CD4-positive, alpha-beta memory T cell (primary cell): ENCODE measurements at regions of chr5 and their contacts with region 1.

Region 1: DNA sequence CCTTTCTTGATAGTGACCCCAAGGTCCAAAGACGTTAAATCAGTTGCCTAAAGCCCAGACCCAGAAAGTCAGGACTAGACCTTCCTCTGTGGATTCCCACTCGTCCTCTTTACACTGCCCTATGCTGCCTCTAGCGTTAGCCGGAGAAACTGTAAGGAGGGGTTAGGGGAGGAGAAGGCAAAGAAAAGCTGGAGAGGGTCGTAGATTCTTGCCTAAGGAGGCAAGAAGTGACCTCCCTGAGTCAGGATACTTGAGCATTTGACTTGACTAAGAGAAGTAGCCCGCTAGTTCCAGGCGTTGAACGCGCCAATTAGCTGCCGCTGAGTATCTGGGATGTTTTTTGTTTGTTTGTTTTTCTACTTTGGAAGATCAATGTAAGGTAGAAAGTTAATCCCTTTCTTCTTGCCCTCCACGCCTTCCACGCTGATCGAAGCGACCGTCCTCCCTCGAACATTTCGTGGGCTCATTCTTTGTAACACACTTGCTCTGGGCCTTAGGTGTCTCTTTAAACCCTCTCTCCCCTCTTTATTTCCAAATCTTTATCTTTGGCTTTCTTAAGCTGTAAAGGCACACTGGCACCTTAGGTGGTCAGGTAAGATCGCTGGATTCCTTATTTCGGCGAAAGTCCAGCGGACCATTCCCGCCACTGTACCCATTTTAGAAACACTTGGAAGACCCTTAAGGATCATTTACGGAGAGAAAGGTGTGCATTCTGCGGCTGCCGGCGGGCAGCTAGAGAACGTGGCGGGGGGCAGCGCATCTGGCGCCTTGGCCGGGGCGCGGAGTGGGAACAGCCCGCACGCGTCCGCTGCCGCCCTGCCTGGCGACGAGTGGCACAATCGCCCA is 5.1 kb upstream of the RGMB start:
- DNase-seq: peak; percentile 29 to 43 (median 37)
- H3K4me3 ChIP-seq: peak overlapping the region; percentile 44 to 52
- H3K4me3 Mint-ChIP-seq: peak overlapping the region; percentile 87 to 98 (median 92)
- H3K27ac ChIP-seq: peak overlapping the region; percentile 6
- H3K27ac Mint-ChIP-seq: peak overlapping the region in 6 of 7 donors; percentile 5 to 85 (median 52)
- H3K4me1 ChIP-seq: peaks cover 37% of the 10 kb centered on the region
- H3K4me1 Mint-ChIP-seq: peaks cover 25 to 57% (median 30%) of the 10 kb centered on the region in 4 donors
- H3K27me3 ChIP-seq: peaks cover 21% of the 10 kb centered on the region
- H3K27me3 Mint-ChIP-seq: peaks cover 24 to 26% of the 10 kb centered on the region in 2 donors

Region 2: DNA sequence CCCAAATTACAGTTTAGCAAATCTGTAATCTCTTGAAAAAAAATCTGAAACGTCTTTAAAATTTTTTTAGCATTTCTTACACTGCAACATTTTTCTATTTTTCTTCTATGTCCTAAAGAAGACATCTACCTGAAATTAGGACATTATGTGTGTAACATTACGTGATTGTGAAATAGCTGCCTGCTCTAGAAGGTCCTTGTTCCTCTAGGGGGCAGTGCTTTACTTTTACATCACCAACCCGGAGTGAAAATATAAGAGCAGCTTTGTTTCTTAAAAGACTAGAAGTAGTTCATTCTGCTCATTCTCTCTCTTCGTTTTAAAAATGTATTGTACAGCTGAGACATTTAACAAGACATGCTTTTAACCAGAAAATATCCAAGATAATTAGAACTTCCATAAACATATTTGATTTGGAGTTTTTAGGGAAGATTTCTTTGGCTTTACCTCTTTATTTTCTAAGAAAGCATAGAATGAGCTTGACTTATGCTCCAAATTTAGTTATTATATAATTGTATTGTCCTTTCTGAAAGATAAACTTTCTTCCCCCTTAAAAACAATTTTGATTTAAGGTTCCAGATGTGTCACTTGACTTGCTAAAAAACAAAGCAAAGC is 1537.3 kb before region 1 on chr5:
- CTCF ChIA-PET with region 1: interaction called, 35 read pairs
- POLR2A ChIA-PET with region 1: no interaction called
- intact Hi-C with region 1: loop called (anchors 2 kb)
- DNase-seq: peak in 4 of 5 donors; percentile 31 to 44 (median 37)
- H3K4me3 ChIP-seq: no peak overlapping the region
- H3K4me3 Mint-ChIP-seq: no peak overlapping the region
- H3K27ac ChIP-seq: no peak overlapping the region
- H3K27ac Mint-ChIP-seq: no peak overlapping the region
- H3K4me1 ChIP-seq: no peaks in the 10 kb centered on the region
- H3K4me1 Mint-ChIP-seq: no peaks in the 10 kb centered on the region
- H3K27me3 ChIP-seq: no peaks in the 10 kb centered on the region
- H3K27me3 Mint-ChIP-seq: peaks cover 4 to 6% of the 10 kb centered on the region in 2 donors

Region 3: GRCh38 chr5:98750693-98751092 is 17.7 kb before region 1 on chr5:
- CTCF ChIA-PET with region 1: interaction called, 35 read pairs
- POLR2A ChIA-PET with region 1: no interaction called
- intact Hi-C with region 1: no loop called
- DNase-seq: no peak
- H3K4me3 ChIP-seq: no peak overlapping the region
- H3K4me3 Mint-ChIP-seq: no peak overlapping the region
- H3K27ac ChIP-seq: no peak overlapping the region
- H3K27ac Mint-ChIP-seq: no peak overlapping the region
- H3K4me1 ChIP-seq: no peaks in the 10 kb centered on the region
- H3K4me1 Mint-ChIP-seq: no peaks in the 10 kb centered on the region
- H3K27me3 ChIP-seq: no peaks in the 10 kb centered on the region
- H3K27me3 Mint-ChIP-seq: peaks cover 1 to 7% of the 10 kb centered on the region in 2 donors

Region 4: DNA sequence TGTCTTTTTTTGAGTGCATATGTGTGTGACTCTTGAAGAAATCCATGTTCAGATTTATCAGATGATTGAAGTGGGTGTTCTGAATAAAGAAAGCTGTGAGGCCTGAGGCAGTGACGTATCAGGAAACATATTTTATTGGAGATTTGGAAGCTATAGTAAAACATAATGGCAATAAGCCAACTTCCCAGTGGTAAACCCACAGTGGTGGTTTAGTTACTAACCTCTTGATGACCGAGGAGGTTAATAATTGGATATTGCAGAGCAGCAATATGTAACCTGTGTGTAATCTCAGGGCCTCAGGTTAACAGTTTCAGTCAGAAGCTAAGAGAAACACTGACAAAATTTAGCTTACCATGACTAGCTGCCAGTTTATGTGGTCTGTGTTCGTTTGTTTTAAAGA is 12.0 kb after region 1 on chr5:
- CTCF ChIA-PET with region 1: interaction called, 51 read pairs
- POLR2A ChIA-PET with region 1: interaction called, 6 read pairs
- intact Hi-C with region 1: no loop called
- DNase-seq: no peak
- H3K4me3 ChIP-seq: no peak overlapping the region
- H3K4me3 Mint-ChIP-seq: no peak overlapping the region
- H3K27ac ChIP-seq: no peak overlapping the region
- H3K27ac Mint-ChIP-seq: no peak overlapping the region
- H3K4me1 ChIP-seq: peaks cover 12% of the 10 kb centered on the region
- H3K4me1 Mint-ChIP-seq: peaks cover 13 to 54% (median 18%) of the 10 kb centered on the region in 4 donors
- H3K27me3 ChIP-seq: no peaks in the 10 kb centered on the region
- H3K27me3 Mint-ChIP-seq: peaks cover 0 to 1% of the 10 kb centered on the region in 2 donors

Region 5: GRCh38 chr5:98796197-98796972 is 28.0 kb after region 1 on chr5:
- CTCF ChIA-PET with region 1: interaction called, 97 read pairs
- POLR2A ChIA-PET with region 1: no interaction called
- intact Hi-C with region 1: loop called (anchors 1 kb)
- DNase-seq: peak; percentile 40 to 61 (median 56)
- H3K4me3 ChIP-seq: no peak overlapping the region
- H3K4me3 Mint-ChIP-seq: no peak overlapping the region
- H3K27ac ChIP-seq: no peak overlapping the region
- H3K27ac Mint-ChIP-seq: peak overlapping the region in 1 of 7 donors; percentile 62
- H3K4me1 ChIP-seq: no peaks in the 10 kb centered on the region
- H3K4me1 Mint-ChIP-seq: peaks cover 0 to 6% (median under 1%) of the 10 kb centered on the region in 4 donors
- H3K27me3 ChIP-seq: no peaks in the 10 kb centered on the region
- H3K27me3 Mint-ChIP-seq: no peaks in the 10 kb centered on the region

Region 6: DNA sequence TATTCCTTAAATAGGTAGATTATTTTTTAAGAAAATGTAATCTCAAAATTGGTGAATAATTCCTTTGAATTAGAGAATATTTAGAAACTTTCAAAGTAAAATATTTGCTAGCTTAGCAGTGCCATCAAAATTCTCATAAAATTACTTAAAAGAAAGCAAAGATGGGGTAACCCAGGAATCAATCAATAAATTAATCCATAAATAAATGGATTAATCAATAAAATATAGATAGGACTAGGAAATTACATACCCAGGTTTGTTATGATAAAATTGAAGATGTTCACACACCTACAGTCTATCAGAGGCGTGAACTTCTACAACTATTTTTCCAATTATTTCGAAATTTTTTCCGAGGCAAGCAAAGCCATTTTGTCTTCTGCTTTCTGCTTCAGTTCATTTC is 1269.3 kb after region 1 on chr5:
- CTCF ChIA-PET with region 1: no interaction called
- POLR2A ChIA-PET with region 1: no interaction called
- intact Hi-C with region 1: no loop called
- DNase-seq: no peak
- H3K4me3 ChIP-seq: no peak overlapping the region
- H3K4me3 Mint-ChIP-seq: no peak overlapping the region
- H3K27ac ChIP-seq: no peak overlapping the region
- H3K27ac Mint-ChIP-seq: no peak overlapping the region
- H3K4me1 ChIP-seq: no peaks in the 10 kb centered on the region
- H3K4me1 Mint-ChIP-seq: no peaks in the 10 kb centered on the region
- H3K27me3 ChIP-seq: no peaks in the 10 kb centered on the region
- H3K27me3 Mint-ChIP-seq: no peaks in the 10 kb centered on the region

Region 7: GRCh38 chr5:100306000-100306399 is 1537.6 kb after region 1 on chr5:
- CTCF ChIA-PET with region 1: no interaction called
- POLR2A ChIA-PET with region 1: no interaction called
- intact Hi-C with region 1: no loop called
- DNase-seq: no peak
- H3K4me3 ChIP-seq: no peak overlapping the region
- H3K4me3 Mint-ChIP-seq: no peak overlapping the region
- H3K27ac ChIP-seq: no peak overlapping the region
- H3K27ac Mint-ChIP-seq: no peak overlapping the region
- H3K4me1 ChIP-seq: no peaks in the 10 kb centered on the region
- H3K4me1 Mint-ChIP-seq: no peaks in the 10 kb centered on the region
- H3K27me3 ChIP-seq: no peaks in the 10 kb centered on the region
- H3K27me3 Mint-ChIP-seq: no peaks in the 10 kb centered on the region